Cardiac septum (tissue), 1 donor: ENCODE measurements at regions of chr3 and their contacts with region 1.

Region 1: DNA sequence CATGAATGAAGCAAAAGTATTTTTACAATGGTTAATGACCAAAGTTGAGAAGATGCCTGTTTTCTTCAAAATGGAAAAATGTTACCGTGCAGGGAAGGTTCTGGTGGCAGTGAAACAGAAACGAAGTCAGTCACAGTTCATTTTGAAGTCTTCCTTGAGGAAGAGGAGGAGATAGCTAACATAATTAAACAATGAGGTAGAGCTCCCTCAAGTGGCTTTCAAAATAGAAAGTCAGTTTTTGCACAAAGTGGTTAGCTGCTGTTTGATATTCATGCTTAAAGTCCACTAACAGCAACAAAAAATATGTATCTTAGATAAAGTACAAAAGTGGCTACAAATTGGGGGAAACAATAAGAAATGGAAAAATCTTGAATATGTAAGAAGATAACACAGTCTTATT is 87.3 kb downstream of the TFG start:
- DNase-seq: no peak

Region 2: GRCh38 chr3:100107221-100107814 is 689.2 kb before region 1 on chr3:
- intact Hi-C with region 1: no loop called
- DNase-seq: no peak

Region 3: GRCh38 chr3:100463002-100463401 is 333.6 kb before region 1 on chr3:
- intact Hi-C with region 1: loop called (anchors 10 kb)
- DNase-seq: no peak

Region 4: DNA sequence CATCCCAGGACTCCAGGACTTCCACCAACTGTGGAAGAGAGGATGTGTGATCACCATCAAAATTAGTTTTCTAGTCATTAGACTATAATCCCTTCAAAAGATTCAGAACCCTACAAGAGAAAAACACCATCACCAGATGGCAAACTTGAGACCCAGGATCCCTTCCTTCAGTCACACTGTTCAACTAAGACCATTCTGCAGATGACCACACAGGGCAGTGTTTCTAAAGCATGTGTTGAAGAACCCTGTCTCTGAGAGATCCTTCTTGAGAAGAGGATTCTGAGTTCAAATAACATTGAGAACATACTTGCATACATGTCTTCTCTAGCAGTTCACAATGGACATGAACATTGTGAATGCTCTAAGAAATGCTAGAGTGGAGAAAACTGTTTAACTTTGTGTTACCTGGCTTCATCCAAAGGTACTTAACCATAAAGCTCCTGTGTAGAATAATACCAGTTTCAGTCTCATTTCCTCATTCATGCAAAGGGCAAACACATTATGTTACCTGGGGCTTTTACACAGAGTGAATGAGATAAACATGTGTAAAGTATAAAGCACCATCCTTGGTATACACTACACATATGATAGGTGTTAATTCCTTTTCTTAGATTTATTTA is 189.6 kb before region 1 on chr3:
- intact Hi-C with region 1: no loop called
- DNase-seq: no peak

Region 5: DNA sequence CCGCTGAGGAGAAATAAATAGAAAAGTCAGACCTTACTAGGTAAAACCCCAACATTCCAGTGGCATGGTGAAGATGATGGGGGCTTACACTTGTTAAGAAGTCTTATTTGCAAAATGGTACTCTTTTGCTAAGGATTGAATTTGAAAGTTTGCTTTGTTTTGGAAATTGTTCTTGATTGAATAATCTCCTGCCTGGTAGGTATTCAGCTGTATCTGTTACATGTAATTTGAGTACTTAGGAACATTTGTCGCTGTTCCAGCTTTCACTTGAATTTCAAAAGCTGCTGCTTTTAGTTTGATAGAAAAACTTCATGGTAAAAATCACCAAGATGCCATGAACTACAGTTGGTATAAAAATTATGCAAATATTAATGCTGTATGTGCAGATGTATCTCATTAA is 42.7 kb before region 1 on chr3:
- intact Hi-C with region 1: no loop called
- DNase-seq: no peak